ENCODE measurements at regions of chr2 and their contacts with region 1.

Region 1: DNA sequence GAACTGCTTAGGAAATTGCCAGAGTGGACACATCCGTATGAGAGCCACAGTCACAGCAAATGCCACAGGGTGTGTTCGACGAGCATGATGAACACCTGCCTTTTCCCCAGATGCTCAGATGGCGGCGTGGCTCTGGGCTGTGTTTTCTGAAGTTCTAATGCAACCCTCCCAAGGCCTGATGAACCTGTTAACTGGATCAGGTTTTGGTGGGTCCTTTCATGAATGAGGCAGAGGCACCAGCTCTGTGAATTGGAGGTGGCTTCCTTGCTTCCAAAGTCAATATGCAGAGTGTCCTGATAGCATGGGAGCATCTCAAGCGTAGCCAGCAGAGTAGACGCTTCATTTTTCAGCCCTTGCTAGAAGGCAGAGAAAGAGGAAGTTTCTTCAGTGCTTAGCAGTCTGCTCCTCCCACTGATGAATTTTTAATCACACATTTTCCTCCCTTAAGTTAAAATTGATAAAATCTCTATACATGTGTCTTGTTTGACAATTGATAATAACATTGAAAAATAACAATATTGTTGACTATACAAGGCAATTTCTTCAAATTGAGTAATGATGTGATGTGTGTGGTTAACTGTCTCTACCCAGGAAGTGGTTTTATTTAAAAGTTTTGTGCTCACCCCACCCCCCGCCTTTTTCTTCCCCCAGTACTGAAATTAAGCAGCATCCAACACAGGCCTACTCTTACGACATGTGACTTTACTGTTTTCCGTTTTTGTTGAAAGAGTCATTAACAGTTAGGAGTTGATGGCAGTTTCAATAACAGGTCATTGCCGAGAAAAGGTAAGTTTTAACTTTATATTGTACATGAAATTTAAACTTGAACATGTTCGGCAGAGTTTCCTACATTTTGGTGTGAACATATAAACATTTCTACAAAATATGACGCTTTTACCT is at the start of gene ARHGAP15:
- DNase-seq: peak; percentile 79
- H3K4me3 Mint-ChIP-seq: peak within 1 kb of the TSS; percentile 85
- H3K27ac Mint-ChIP-seq: peak within 1 kb of the TSS; percentile 99
- H3K4me1 Mint-ChIP-seq: peaks cover 39% of the 10 kb centered on the region
- H3K27me3 Mint-ChIP-seq: no peaks in the 10 kb centered on the region
- total RNA-seq, gene ARHGAP15: 167 TPM

Region 2: DNA sequence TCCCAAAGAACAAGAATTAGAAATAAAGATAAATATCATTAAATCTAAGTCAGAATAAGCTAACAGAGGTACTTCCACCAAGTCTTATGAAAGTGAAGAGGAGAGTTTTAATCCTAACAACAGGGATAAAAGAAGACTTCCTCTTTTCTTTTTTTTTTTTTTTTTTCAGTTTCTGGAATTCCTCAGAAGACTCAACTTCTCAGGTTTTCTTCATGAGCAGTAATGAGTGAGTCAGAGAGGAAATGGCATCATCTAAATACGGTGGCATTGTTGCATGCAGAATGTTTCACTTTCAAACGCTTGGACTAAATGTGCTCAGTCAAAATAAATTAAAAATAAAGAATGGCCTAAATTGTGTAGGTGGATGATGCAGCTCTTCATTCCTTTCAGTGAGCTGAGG is 45.3 kb before region 1 on chr2:
- CTCF ChIA-PET with region 1: no interaction called
- POLR2A ChIA-PET with region 1: interaction called, 10 read pairs
- DNase-seq: no peak
- H3K4me3 Mint-ChIP-seq: peak overlapping the region; percentile 29
- H3K27ac Mint-ChIP-seq: peak overlapping the region; percentile 58
- H3K4me1 Mint-ChIP-seq: peaks cover 37% of the 10 kb centered on the region
- H3K27me3 Mint-ChIP-seq: no peaks in the 10 kb centered on the region

Region 3: GRCh38 chr2:143110758-143111428 is 18.0 kb before region 1 on chr2:
- CTCF ChIA-PET with region 1: interaction called, 56 read pairs
- POLR2A ChIA-PET with region 1: interaction called, 66 read pairs
- DNase-seq: peak; percentile 73
- H3K4me3 Mint-ChIP-seq: peak overlapping the region; percentile 8
- H3K27ac Mint-ChIP-seq: peak overlapping the region; percentile 77
- H3K4me1 Mint-ChIP-seq: peaks cover 27% of the 10 kb centered on the region
- H3K27me3 Mint-ChIP-seq: peaks cover 4% of the 10 kb centered on the region

Region 4: GRCh38 chr2:143140864-143141661 is 12.1 kb after region 1 on chr2:
- CTCF ChIA-PET with region 1: interaction called, 4 read pairs
- POLR2A ChIA-PET with region 1: interaction called, 75 read pairs
- DNase-seq: no peak
- H3K4me3 Mint-ChIP-seq: no peak overlapping the region
- H3K27ac Mint-ChIP-seq: peak overlapping the region; percentile 14
- H3K4me1 Mint-ChIP-seq: peaks cover 85% of the 10 kb centered on the region
- H3K27me3 Mint-ChIP-seq: no peaks in the 10 kb centered on the region

Region 5: GRCh38 chr2:143148757-143149156 is 19.8 kb after region 1 on chr2:
- CTCF ChIA-PET with region 1: no interaction called
- POLR2A ChIA-PET with region 1: interaction called, 75 read pairs
- DNase-seq: no peak
- H3K4me3 Mint-ChIP-seq: no peak overlapping the region
- H3K27ac Mint-ChIP-seq: no peak overlapping the region
- H3K4me1 Mint-ChIP-seq: peaks cover 78% of the 10 kb centered on the region
- H3K27me3 Mint-ChIP-seq: no peaks in the 10 kb centered on the region

Region 6: DNA sequence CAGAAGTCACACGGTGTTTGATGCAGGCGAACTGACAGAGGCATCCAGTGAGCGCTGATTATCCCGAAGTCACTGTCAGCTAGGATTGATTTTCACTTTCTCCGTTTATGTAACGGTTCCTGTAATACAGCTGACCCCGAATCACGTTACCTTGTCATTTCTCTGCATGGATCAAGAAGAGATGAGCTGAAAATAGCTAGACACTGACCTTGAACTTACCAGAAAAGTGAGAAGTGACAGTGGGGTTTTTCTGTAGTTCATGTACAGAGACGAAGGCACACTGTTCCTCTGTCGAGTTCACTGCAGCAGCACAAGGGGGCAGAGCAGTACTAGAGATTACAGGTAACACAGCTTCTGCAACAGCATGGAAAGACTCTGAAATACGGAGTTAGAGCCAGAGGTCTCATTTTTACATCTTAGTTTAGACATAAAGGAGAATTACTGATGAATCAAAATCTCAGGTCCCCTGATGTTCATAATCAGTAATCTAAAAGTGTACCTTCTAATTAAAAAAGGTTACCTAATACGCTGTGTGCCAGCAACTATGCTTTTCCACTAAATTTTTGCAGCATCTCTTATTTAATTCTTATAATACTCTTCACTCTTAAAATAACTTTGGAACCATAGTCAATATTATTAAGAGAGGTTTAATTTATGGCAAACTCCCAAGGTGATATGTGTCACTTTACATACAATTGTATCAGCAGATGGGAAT is 33.3 kb after region 1 on chr2:
- CTCF ChIA-PET with region 1: interaction called, 10 read pairs
- POLR2A ChIA-PET with region 1: interaction called, 6 read pairs
- DNase-seq: peak; percentile 48
- H3K4me3 Mint-ChIP-seq: no peak overlapping the region
- H3K27ac Mint-ChIP-seq: no peak overlapping the region
- H3K4me1 Mint-ChIP-seq: peaks cover 51% of the 10 kb centered on the region
- H3K27me3 Mint-ChIP-seq: no peaks in the 10 kb centered on the region

Region 7: GRCh38 chr2:143246815-143247744 is 118.1 kb after region 1 on chr2:
- CTCF ChIA-PET with region 1: interaction called, 3 read pairs
- POLR2A ChIA-PET with region 1: interaction called, 231 read pairs
- DNase-seq: peak; percentile 59
- H3K4me3 Mint-ChIP-seq: no peak overlapping the region
- H3K27ac Mint-ChIP-seq: peak overlapping the region; percentile 65
- H3K4me1 Mint-ChIP-seq: peaks cover 30% of the 10 kb centered on the region
- H3K27me3 Mint-ChIP-seq: no peaks in the 10 kb centered on the region